Activated naive CD4-positive, alpha-beta T cell treated with anti-CD3 and anti-CD28 coated beads for 36 hours (primary cell): ENCODE measurements at regions of chr17 and their contacts with region 1.

Region 1: DNA sequence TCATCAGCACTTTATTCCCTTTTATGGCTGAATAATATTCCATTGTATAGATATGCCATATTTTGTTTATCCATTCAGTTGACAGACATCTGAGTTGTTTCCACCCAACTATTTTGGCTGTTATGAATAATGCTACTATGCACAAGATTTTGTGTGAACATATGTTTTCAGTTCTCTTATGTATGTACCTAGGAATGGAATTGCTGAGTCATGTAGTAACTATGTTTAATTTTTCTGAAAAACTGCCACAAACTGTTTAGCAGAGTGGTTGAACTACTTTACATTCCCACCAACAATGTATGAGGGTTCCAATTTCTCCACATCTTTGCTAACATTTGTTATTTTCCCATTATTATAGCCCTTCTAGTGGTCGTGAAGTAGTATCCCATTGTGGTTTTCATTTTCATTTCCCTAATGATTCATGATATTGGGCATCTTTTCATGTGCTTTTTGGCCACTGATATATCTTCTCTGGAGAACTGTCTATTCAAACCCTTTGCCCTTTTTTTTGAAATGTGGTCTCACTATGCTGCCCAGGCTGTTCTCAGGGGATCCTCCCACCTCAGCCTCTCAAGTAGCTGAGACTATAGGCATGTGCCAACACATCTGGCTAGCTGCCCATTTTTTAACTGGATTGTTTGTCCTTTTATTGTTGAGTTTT is 26.3 kb downstream of the SMURF2 start:
- DNase-seq: no peak
- H3K4me3 Mint-ChIP-seq: no peak overlapping the region
- H3K27ac Mint-ChIP-seq: peak overlapping the region; percentile 11
- H3K4me1 Mint-ChIP-seq: peaks cover 56% of the 10 kb centered on the region
- H3K27me3 Mint-ChIP-seq: no peaks in the 10 kb centered on the region

Region 2: GRCh38 chr17:64572638-64573154 is 63.1 kb before region 1 on chr17:
- CTCF ChIA-PET with region 1: no interaction called
- intact Hi-C with region 1: loop called (anchors 2 kb)
- DNase-seq: peak; percentile 7
- H3K4me3 Mint-ChIP-seq: no peak overlapping the region
- H3K27ac Mint-ChIP-seq: peak overlapping the region; percentile 70
- H3K4me1 Mint-ChIP-seq: peaks cover 14% of the 10 kb centered on the region
- H3K27me3 Mint-ChIP-seq: no peaks in the 10 kb centered on the region

Region 3: DNA sequence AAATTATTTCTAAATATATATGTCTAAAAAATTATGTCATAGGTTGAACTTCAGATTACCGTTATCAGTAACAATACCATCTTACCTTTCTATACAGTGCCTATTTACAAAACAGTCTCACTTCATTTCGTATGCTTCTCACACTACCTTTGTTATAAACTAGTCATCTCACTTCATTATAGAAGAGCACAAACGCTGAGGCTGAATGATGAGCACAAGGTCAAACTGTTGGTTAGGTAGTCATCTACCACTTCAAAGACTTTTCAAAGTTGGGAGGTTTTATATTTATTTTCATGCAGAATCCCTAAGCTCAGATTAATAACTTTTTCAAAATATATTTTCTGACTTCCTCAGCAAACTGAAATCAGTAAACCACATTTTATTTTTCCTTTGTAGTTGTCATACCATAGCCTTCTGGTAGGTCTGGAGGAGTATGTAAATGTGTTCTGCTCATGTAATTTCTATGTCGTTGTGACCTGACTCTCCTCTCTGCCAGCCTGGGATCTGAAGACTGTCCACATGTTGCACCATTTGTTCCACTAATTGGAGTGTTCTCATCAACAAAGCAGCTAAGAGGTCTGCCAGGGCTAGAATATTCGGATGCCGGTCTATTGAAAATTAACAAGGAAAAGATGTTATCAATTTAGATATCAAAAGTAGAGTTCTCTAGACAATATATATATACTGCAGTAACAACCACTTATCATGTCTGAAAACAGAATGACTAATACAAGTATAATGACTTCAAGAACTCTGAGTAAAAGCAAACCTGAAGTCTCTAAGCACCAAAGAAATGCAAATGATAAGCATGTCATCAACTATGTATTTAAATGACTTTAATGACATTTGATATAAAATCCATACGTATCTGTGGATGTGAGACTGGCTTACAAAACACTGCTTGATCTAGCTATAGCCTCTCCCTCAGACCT is 55.1 kb before region 1 on chr17:
- CTCF ChIA-PET with region 1: no interaction called
- intact Hi-C with region 1: loop called (anchors 1 kb)
- DNase-seq: no peak
- H3K4me3 Mint-ChIP-seq: no peak overlapping the region
- H3K27ac Mint-ChIP-seq: peak overlapping the region; percentile 82
- H3K4me1 Mint-ChIP-seq: peaks cover 13% of the 10 kb centered on the region
- H3K27me3 Mint-ChIP-seq: no peaks in the 10 kb centered on the region

Region 4: GRCh38 chr17:64608540-64608981 is 27.2 kb before region 1 on chr17:
- CTCF ChIA-PET with region 1: interaction called, 3 read pairs
- intact Hi-C with region 1: loop called (anchors 1 kb)
- DNase-seq: no peak
- H3K4me3 Mint-ChIP-seq: peak overlapping the region; percentile 30
- H3K27ac Mint-ChIP-seq: peak overlapping the region; percentile 82
- H3K4me1 Mint-ChIP-seq: peaks cover 40% of the 10 kb centered on the region
- H3K27me3 Mint-ChIP-seq: no peaks in the 10 kb centered on the region

Region 5: GRCh38 chr17:64653325-64653984 is 17.7 kb after region 1 on chr17:
- CTCF ChIA-PET with region 1: interaction called, 8 read pairs
- intact Hi-C with region 1: loop called (anchors 1 kb)
- DNase-seq: no peak
- H3K4me3 Mint-ChIP-seq: no peak overlapping the region
- H3K27ac Mint-ChIP-seq: peak overlapping the region; percentile 50
- H3K4me1 Mint-ChIP-seq: peaks cover 45% of the 10 kb centered on the region
- H3K27me3 Mint-ChIP-seq: no peaks in the 10 kb centered on the region

Region 6: GRCh38 chr17:64679688-64680216 is 44.0 kb after region 1 on chr17:
- CTCF ChIA-PET with region 1: no interaction called
- intact Hi-C with region 1: no loop called
- DNase-seq: no peak
- H3K4me3 Mint-ChIP-seq: no peak overlapping the region
- H3K27ac Mint-ChIP-seq: no peak overlapping the region
- H3K4me1 Mint-ChIP-seq: no peaks in the 10 kb centered on the region
- H3K27me3 Mint-ChIP-seq: no peaks in the 10 kb centered on the region